ENCODE measurements at regions of chr9 and their contacts with region 1.

Region 1: GRCh38 chr9:130107234-130107861 is 53.6 kb downstream of the GPR107 start:
- DNase-seq: peak; percentile 75 to 85
- ATAC-seq: peak; percentile 69 to 88 (median 80)
- H3K4me3 ChIP-seq: no peak overlapping the region
- H3K27ac ChIP-seq: no peak overlapping the region
- H3K4me1 ChIP-seq: peaks cover 0 to 13% (median under 1%) of the 10 kb centered on the region in 9 donors
- H3K27me3 ChIP-seq: no peaks in the 10 kb centered on the region
- CTCF ChIP-seq: peak; percentile 59 to 86 (median 79)

Region 2: GRCh38 chr9:129726322-129727160 is 380.8 kb before region 1 on chr9:
- intact Hi-C with region 1: no loop called
- DNase-seq: peak; percentile 78 to 79
- ATAC-seq: peak; percentile 88 to 94 (median 92)
- H3K4me3 ChIP-seq: peak overlapping the region in 5 of 10 donors; percentile 17 to 28 (median 18)
- H3K27ac ChIP-seq: peak overlapping the region in 4 of 10 donors; percentile 42 to 53 (median 48)
- H3K4me1 ChIP-seq: peaks cover 0 to 24% (median 16%) of the 10 kb centered on the region in 9 donors
- H3K27me3 ChIP-seq: peaks cover 0 to 9% (median 0%) of the 10 kb centered on the region in 7 donors
- CTCF ChIP-seq: peak; percentile 80 to 95 (median 92)

Region 3: GRCh38 chr9:130235897-130236668 is 128.7 kb after region 1 on chr9:
- intact Hi-C with region 1: loop called (anchors 1 to 5 kb)
- DNase-seq: peak; percentile 54 to 65
- ATAC-seq: peak; percentile 27 to 75 (median 54)
- H3K4me3 ChIP-seq: peak overlapping the region in 1 of 10 donors; percentile 22
- H3K27ac ChIP-seq: no peak overlapping the region
- H3K4me1 ChIP-seq: peaks cover 0 to 15% (median 5%) of the 10 kb centered on the region in 9 donors
- H3K27me3 ChIP-seq: no peaks in the 10 kb centered on the region
- CTCF ChIP-seq: peak; percentile 98 to 100 (median 99)

Region 4: GRCh38 chr9:130336885-130337284 is 229.5 kb after region 1 on chr9:
- intact Hi-C with region 1: loop called in 9 of 10 experiments (anchors 2 to 10 kb)
- DNase-seq: no peak
- ATAC-seq: peak in 3 of 8 donors; percentile 31 to 38 (median 32)
- H3K4me3 ChIP-seq: no peak overlapping the region
- H3K27ac ChIP-seq: no peak overlapping the region
- H3K4me1 ChIP-seq: peaks cover 0 to 9% (median 0%) of the 10 kb centered on the region in 9 donors
- H3K27me3 ChIP-seq: peaks cover 0 to 11% (median 0%) of the 10 kb centered on the region in 7 donors
- CTCF ChIP-seq: no peak

Region 5: GRCh38 chr9:130343445-130343918 is 236.1 kb after region 1 on chr9:
- intact Hi-C with region 1: loop called (anchors 2 to 10 kb)
- DNase-seq: no peak
- ATAC-seq: peak in 7 of 8 donors; percentile 3 to 41 (median 24)
- H3K4me3 ChIP-seq: no peak overlapping the region
- H3K27ac ChIP-seq: no peak overlapping the region
- H3K4me1 ChIP-seq: no peaks in the 10 kb centered on the region
- H3K27me3 ChIP-seq: peaks cover 0 to 6% (median 0%) of the 10 kb centered on the region in 7 donors
- CTCF ChIP-seq: peak; percentile 65 to 81 (median 73)